ENCODE measurements at regions of chr5 and their contacts with region 1.

Region 1: DNA sequence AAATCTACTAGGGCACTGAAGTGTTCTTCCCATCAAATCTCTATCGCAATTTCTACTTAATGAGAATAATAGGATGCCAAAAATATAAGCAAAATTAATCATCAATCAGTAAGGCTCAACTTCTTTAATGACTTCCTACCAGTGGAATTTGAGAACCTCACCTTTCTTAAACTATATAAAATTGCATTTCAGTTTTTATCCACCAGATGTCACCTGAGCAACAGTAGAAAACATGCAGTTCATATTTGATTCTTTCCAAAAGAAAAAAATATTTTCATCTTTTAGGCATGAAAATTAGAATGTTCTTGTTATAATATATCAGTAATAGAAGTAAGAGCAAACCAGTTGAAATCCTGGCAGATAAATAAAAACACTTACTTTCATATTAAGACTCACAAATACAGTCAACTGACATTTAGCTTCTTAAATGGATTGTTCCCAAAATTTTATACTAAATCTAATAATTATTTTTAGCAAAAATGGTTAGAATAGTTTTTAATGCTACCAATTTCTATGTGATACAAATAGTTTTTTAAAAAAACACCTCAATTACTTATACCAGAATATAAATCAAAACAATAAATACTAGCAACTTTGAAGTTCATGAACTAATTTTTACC is 13.4 kb upstream of the CCDC112 start:
- DNase-seq: no peak
- ATAC-seq: peak; percentile 61 to 78 (median 75)
- H3K4me3 ChIP-seq: no peak overlapping the region
- H3K27ac ChIP-seq: no peak overlapping the region
- H3K4me1 ChIP-seq: no peaks in the 10 kb centered on the region
- H3K27me3 ChIP-seq: no peaks in the 10 kb centered on the region
- CTCF ChIP-seq: peak; percentile 18 to 62 (median 46)

Region 2: GRCh38 chr5:115098041-115098702 is 211.7 kb before region 1 on chr5:
- intact Hi-C with region 1: no loop called
- DNase-seq: peak in 2 of 6 donors; percentile 24 to 38
- ATAC-seq: peak; percentile 77 to 95 (median 91)
- H3K4me3 ChIP-seq: no peak overlapping the region
- H3K27ac ChIP-seq: no peak overlapping the region
- H3K4me1 ChIP-seq: no peaks in the 10 kb centered on the region
- H3K27me3 ChIP-seq: no peaks in the 10 kb centered on the region
- CTCF ChIP-seq: peak in 3 of 4 donors; percentile 49 to 62 (median 61)

Region 3: GRCh38 chr5:115209279-115209678 is 100.6 kb before region 1 on chr5:
- intact Hi-C with region 1: no loop called
- DNase-seq: peak in 1 of 6 donors; percentile 26
- ATAC-seq: peak; percentile 48 to 95 (median 79)
- H3K4me3 ChIP-seq: no peak overlapping the region
- H3K27ac ChIP-seq: no peak overlapping the region
- H3K4me1 ChIP-seq: peaks cover 0 to 3% (median 0%) of the 10 kb centered on the region in 3 donors
- H3K27me3 ChIP-seq: no peaks in the 10 kb centered on the region
- CTCF ChIP-seq: no peak

Region 4: GRCh38 chr5:115423541-115423940 is 113.7 kb after region 1 on chr5:
- intact Hi-C with region 1: no loop called
- DNase-seq: peak in 4 of 6 donors; percentile 44 to 58 (median 54)
- ATAC-seq: peak; percentile 76 to 94 (median 88)
- H3K4me3 ChIP-seq: no peak overlapping the region
- H3K27ac ChIP-seq: no peak overlapping the region
- H3K4me1 ChIP-seq: peaks cover 5 to 11% (median 7%) of the 10 kb centered on the region in 3 donors
- H3K27me3 ChIP-seq: no peaks in the 10 kb centered on the region
- CTCF ChIP-seq: no peak

Region 5: GRCh38 chr5:115571441-115571878 is 261.6 kb after region 1 on chr5:
- intact Hi-C with region 1: loop called in 2 of 3 experiments (anchors 5 kb)
- DNase-seq: peak in 2 of 6 donors; percentile 42 to 43
- ATAC-seq: peak; percentile 80 to 91 (median 83)
- H3K4me3 ChIP-seq: no peak overlapping the region
- H3K27ac ChIP-seq: peak overlapping the region in 3 of 4 donors; percentile 10 to 38 (median 21)
- H3K4me1 ChIP-seq: peaks cover 6 to 7% (median 7%) of the 10 kb centered on the region in 3 donors
- H3K27me3 ChIP-seq: no peaks in the 10 kb centered on the region
- CTCF ChIP-seq: no peak

Region 6: DNA sequence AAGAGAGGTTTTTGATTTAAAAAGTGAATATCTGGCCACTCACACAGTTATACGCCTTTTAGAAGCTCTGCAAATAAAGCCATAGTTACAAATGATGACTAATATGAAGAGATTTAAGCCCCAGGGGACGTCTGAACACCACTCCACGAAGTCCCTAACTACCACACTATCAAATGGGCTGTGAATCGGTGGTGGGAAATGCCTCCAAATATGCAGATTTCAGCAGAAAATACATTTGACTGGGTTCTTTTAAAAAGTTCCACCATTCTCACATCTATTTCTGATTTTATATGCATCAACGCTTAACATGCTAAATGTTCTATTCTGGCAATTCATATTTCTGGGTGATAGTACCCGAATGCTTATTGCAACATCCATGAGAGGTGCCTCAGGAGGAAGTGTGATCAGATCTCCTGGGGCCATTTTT is 269.9 kb after region 1 on chr5:
- intact Hi-C with region 1: loop called (anchors 5 to 10 kb)
- DNase-seq: no peak
- ATAC-seq: no peak
- H3K4me3 ChIP-seq: no peak overlapping the region
- H3K27ac ChIP-seq: no peak overlapping the region
- H3K4me1 ChIP-seq: no peaks in the 10 kb centered on the region
- H3K27me3 ChIP-seq: no peaks in the 10 kb centered on the region
- CTCF ChIP-seq: no peak

Region 7: DNA sequence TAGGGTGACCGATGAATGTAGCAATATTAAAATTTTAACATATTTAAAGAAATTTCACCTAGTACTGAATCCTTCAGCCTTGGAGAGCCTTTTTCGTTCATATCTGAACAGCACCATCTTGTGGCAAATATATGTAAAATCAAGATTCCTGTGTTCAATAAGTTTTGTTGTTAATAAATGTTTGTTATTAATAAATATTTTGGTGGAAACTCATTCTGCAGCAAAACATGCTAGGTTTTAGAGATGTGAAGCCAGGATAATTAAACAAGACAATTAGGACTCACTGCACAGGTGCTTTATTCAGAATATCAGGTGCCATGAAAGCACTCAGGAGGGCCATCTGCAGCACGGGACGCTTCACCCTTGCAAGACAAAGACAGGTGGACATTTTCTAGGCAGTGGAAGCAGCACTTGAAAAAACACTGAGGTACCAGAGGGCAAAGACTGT is 276.8 kb after region 1 on chr5:
- intact Hi-C with region 1: loop called in 1 of 3 experiments (anchors 10 kb)
- DNase-seq: no peak
- ATAC-seq: peak in 3 of 4 donors; percentile 70 to 74 (median 71)
- H3K4me3 ChIP-seq: no peak overlapping the region
- H3K27ac ChIP-seq: no peak overlapping the region
- H3K4me1 ChIP-seq: peaks cover 0 to 5% (median 3%) of the 10 kb centered on the region in 3 donors
- H3K27me3 ChIP-seq: no peaks in the 10 kb centered on the region
- CTCF ChIP-seq: peak; percentile 13 to 58 (median 33)